Spleen (tissue), 13 donors: ENCODE measurements at regions of chr1 and their contacts with region 1.

Region 1: DNA sequence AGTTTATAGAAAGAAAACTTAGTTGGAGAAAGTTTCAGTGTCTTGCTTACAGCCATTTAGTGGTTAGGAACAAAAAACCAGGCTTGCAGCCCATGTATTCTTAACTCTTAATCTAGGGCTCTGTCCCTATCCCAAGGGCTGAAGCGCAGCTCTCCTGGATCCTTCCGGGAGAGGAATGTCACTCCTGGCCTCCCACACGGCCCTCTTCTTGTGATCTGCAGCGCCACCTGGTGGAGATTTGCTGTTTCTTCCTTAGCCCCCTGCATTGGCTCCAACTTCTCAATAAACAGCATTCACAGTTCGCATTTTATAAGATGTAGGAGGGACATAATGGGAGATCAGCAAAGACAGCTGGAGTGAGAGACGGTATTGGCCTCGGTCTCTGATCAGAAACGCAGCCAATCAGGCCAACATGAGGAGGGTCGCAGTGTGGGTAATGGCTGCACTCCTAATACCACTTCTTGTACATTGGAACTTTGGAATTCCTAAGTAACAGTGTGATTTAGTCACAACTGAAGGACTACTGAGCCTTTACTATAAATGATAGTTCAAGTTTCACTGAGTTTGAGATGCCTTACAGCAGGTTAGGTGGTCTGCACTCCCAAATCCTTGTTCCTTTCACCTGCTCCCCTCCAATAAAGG is 283.4 kb downstream of the ASTN1 start:
- DNase-seq: no peak
- H3K4me3 ChIP-seq: no peak overlapping the region
- H3K27ac ChIP-seq: no peak overlapping the region
- H3K4me1 ChIP-seq: no peaks in the 10 kb centered on the region
- H3K27me3 ChIP-seq: no peaks in the 10 kb centered on the region
- CTCF ChIP-seq: peak; percentile 19 to 82 (median 70)
- POLR2A ChIP-seq: no peak

Region 2: DNA sequence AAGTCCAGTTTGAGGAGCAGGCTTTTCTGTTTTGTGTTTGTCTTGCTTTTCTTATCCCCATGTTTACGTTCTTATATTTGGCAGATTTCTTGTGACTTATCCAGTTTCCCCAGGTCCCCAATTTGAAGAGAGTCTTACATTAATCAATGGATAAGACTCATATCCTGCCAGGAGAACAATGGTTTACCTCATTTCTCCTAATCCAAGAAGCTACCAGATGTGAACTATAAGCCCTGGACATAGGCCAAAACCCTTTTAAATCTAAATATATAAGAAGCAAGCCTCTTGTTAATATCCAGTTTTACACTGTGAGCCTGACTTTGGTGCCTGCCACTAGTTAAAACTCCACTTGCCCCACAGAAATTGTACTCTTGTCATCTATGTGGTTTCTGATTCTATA is 658.9 kb before region 1 on chr1:
- intact Hi-C with region 1: no loop called
- DNase-seq: no peak
- H3K4me3 ChIP-seq: no peak overlapping the region
- H3K27ac ChIP-seq: no peak overlapping the region
- H3K4me1 ChIP-seq: no peaks in the 10 kb centered on the region
- H3K27me3 ChIP-seq: no peaks in the 10 kb centered on the region
- CTCF ChIP-seq: no peak
- POLR2A ChIP-seq: no peak

Region 3: GRCh38 chr1:176374967-176375569 is 506.0 kb before region 1 on chr1:
- intact Hi-C with region 1: loop called (anchors 5 kb)
- DNase-seq: peak; percentile 79
- H3K4me3 ChIP-seq: no peak overlapping the region
- H3K27ac ChIP-seq: no peak overlapping the region
- H3K4me1 ChIP-seq: no peaks in the 10 kb centered on the region
- H3K27me3 ChIP-seq: peaks cover 0 to 12% (median 0%) of the 10 kb centered on the region in 7 donors
- CTCF ChIP-seq: peak in 10 of 11 experiments; percentile 23 to 82 (median 76)
- POLR2A ChIP-seq: no peak

Region 4: GRCh38 chr1:176559878-176560277 is 321.2 kb before region 1 on chr1:
- intact Hi-C with region 1: loop called (anchors 10 kb)
- DNase-seq: no peak
- H3K4me3 ChIP-seq: no peak overlapping the region
- H3K27ac ChIP-seq: no peak overlapping the region
- H3K4me1 ChIP-seq: no peaks in the 10 kb centered on the region
- H3K27me3 ChIP-seq: peaks cover 0 to 26% (median 0%) of the 10 kb centered on the region in 7 donors
- CTCF ChIP-seq: peak in 10 of 11 experiments; percentile 27 to 69 (median 57)
- POLR2A ChIP-seq: no peak

Region 5: GRCh38 chr1:177032434-177032833 is 151.4 kb after region 1 on chr1:
- intact Hi-C with region 1: no loop called
- DNase-seq: no peak
- H3K4me3 ChIP-seq: no peak overlapping the region
- H3K27ac ChIP-seq: no peak overlapping the region
- H3K4me1 ChIP-seq: no peaks in the 10 kb centered on the region
- H3K27me3 ChIP-seq: no peaks in the 10 kb centered on the region
- CTCF ChIP-seq: no peak
- POLR2A ChIP-seq: no peak